Naive thymus-derived CD4-positive, alpha-beta T cell (primary cell): ENCODE measurements at regions of chr3 and their contacts with region 1.

Region 1: GRCh38 chr3:66500576-66501482 is at the start of gene LRIG1:
- DNase-seq: peak; percentile 86 to 99 (median 92)
- ATAC-seq: peak; percentile 96
- H3K4me3 ChIP-seq: peak within 1 kb of the TSS; percentile 61
- H3K4me3 Mint-ChIP-seq: peak within 1 kb of the TSS; percentile 89 to 98 (median 94)
- H3K27ac ChIP-seq: peak within 1 kb of the TSS; percentile 60
- H3K27ac Mint-ChIP-seq: peak within 1 kb of the TSS; percentile 53 to 87 (median 74)
- H3K4me1 ChIP-seq: peaks cover 39 to 42% of the 10 kb centered on the region in 2 donors
- H3K4me1 Mint-ChIP-seq: peaks cover 38 to 69% (median 64%) of the 10 kb centered on the region in 7 donors
- H3K27me3 ChIP-seq: no peaks in the 10 kb centered on the region
- H3K27me3 Mint-ChIP-seq: peaks cover 0 to 36% (median 5%) of the 10 kb centered on the region in 5 donors
- total RNA-seq, gene LRIG1: 28.5 to 46.3 (median 34.4) TPM

Region 2: DNA sequence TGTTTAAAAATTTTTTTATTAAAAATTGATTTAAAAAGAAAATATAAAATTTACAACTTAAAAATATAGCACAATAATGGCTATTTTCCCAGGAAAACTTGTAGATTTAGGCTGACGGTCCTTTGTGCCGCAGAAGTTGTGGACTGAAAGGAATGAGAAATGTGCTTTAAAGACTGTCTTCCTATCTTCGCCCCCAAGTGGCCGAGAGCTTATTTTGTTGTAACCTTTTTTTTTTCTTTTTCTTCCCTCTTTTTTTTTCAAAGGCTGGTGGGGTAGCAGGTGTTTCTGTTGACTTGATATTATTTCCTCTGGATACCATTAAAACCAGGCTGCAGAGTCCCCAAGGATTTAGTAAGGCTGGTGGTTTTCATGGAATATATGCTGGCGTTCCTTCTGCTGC is 264.5 kb before region 1 on chr3:
- CTCF ChIA-PET with region 1: no interaction called
- POLR2A ChIA-PET with region 1: no interaction called
- intact Hi-C with region 1: loop called in 1 of 2 experiments (anchors 5 kb)
- DNase-seq: no peak
- ATAC-seq: no peak
- H3K4me3 ChIP-seq: no peak overlapping the region
- H3K4me3 Mint-ChIP-seq: no peak overlapping the region
- H3K27ac ChIP-seq: no peak overlapping the region
- H3K27ac Mint-ChIP-seq: no peak overlapping the region
- H3K4me1 ChIP-seq: no peaks in the 10 kb centered on the region
- H3K4me1 Mint-ChIP-seq: peaks cover 8 to 43% (median 21%) of the 10 kb centered on the region in 7 donors
- H3K27me3 ChIP-seq: no peaks in the 10 kb centered on the region
- H3K27me3 Mint-ChIP-seq: no peaks in the 10 kb centered on the region

Region 3: GRCh38 chr3:66302288-66302687 is 198.5 kb before region 1 on chr3:
- CTCF ChIA-PET with region 1: no interaction called
- POLR2A ChIA-PET with region 1: no interaction called
- intact Hi-C with region 1: loop called (anchors 1 to 2 kb)
- DNase-seq: peak in 7 of 9 donors; percentile 44 to 78 (median 64)
- ATAC-seq: peak; percentile 87
- H3K4me3 ChIP-seq: no peak overlapping the region
- H3K4me3 Mint-ChIP-seq: peak overlapping the region in 9 of 10 donors; percentile 29 to 71 (median 50)
- H3K27ac ChIP-seq: peak overlapping the region; percentile 53
- H3K27ac Mint-ChIP-seq: peak overlapping the region; percentile 71 to 99 (median 94)
- H3K4me1 ChIP-seq: peaks cover 49 to 79% of the 10 kb centered on the region in 2 donors
- H3K4me1 Mint-ChIP-seq: peaks cover 50 to 86% (median 69%) of the 10 kb centered on the region in 7 donors
- H3K27me3 ChIP-seq: no peaks in the 10 kb centered on the region
- H3K27me3 Mint-ChIP-seq: no peaks in the 10 kb centered on the region

Region 4: DNA sequence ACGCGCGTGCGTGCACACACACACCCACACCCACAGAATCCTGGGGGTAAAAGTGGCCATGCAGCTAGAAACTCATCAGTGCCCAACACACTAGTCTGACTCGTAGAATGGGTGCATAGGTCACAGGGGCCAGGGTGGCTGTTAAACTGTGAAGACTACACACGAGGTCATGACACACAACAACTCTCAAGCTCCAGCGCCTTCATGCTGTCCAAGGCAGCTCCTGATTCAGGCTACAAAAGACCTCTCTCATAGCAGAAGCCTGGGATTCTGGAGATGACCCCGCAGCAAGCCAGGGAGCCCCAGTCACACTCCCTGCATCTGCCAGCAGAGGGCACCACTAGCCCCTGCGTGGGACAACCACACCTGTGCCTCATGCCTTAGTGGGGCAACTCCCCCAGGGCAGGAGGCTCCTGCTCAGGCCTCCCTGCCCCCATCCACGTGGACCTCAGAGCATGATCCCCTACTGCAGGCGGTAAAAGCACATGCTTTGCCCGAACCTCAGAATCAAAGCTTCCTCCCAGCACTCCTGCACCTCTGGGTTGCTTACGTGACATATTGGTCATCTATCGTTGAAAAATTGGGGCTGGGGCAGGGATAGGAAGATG is 93.1 kb before region 1 on chr3:
- CTCF ChIA-PET with region 1: interaction called, 3 read pairs
- POLR2A ChIA-PET with region 1: interaction called, 3 read pairs
- intact Hi-C with region 1: loop called (anchors 1 kb)
- DNase-seq: peak; percentile 45 to 79 (median 65)
- ATAC-seq: peak; percentile 89
- H3K4me3 ChIP-seq: no peak overlapping the region
- H3K4me3 Mint-ChIP-seq: no peak overlapping the region
- H3K27ac ChIP-seq: no peak overlapping the region
- H3K27ac Mint-ChIP-seq: no peak overlapping the region
- H3K4me1 ChIP-seq: no peaks in the 10 kb centered on the region
- H3K4me1 Mint-ChIP-seq: peaks cover 0 to 10% (median 0%) of the 10 kb centered on the region in 7 donors
- H3K27me3 ChIP-seq: no peaks in the 10 kb centered on the region
- H3K27me3 Mint-ChIP-seq: no peaks in the 10 kb centered on the region

Region 5: GRCh38 chr3:66483406-66483906 is 17.4 kb before region 1 on chr3:
- CTCF ChIA-PET with region 1: no interaction called
- POLR2A ChIA-PET with region 1: interaction called, 6 read pairs
- intact Hi-C with region 1: loop called (anchors 1 kb)
- DNase-seq: peak in 1 of 9 donors; percentile 13
- ATAC-seq: peak; percentile 55
- H3K4me3 ChIP-seq: no peak overlapping the region
- H3K4me3 Mint-ChIP-seq: peak overlapping the region in 8 of 10 donors; percentile 1 to 68 (median 50)
- H3K27ac ChIP-seq: no peak overlapping the region
- H3K27ac Mint-ChIP-seq: peak overlapping the region in 7 of 9 donors; percentile 7 to 70 (median 55)
- H3K4me1 ChIP-seq: peaks cover 42 to 47% of the 10 kb centered on the region in 2 donors
- H3K4me1 Mint-ChIP-seq: peaks cover 53 to 86% (median 77%) of the 10 kb centered on the region in 7 donors
- H3K27me3 ChIP-seq: no peaks in the 10 kb centered on the region
- H3K27me3 Mint-ChIP-seq: no peaks in the 10 kb centered on the region

Region 6: DNA sequence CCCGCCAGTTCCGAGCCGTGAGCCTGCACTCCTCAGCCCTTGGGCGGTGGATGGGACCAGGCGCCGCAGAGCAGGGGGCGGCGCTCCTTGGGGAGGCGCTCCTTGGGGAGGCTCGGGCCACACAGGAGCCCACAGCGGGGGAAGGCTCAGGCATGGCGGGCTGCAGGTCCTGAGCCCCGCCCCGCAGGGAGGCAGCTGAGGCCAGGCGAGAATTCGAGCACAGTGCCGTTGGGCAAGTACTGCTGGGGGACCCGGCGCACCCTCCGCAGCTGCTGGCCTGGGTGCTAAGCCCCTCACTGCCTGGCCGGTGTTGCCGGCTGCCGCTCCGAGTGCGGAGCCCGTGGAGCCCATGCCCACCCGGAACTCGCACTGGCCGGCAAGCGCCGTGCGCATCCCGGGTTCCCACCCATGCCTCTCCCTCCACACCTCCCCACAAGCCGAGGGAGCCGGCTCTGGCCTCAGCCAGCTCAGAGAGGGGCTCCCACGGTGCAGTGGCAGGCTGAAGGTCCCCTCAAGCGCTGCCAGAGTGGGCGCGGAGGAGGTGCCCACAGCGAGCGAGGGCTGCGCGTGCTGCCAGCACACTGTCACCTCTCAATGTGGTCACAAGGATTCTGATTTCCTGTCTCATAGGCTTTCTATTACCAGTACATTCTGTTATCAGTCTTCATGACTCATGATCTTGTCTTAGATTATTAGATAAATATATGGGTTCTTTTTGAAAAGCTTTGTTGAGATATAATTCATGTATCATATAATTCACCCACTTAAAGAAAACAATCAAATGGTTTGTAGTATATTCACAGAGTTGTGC is 44.0 kb after region 1 on chr3:
- CTCF ChIA-PET with region 1: no interaction called
- POLR2A ChIA-PET with region 1: no interaction called
- intact Hi-C with region 1: no loop called
- DNase-seq: no peak
- ATAC-seq: no peak
- H3K4me3 ChIP-seq: no peak overlapping the region
- H3K4me3 Mint-ChIP-seq: no peak overlapping the region
- H3K27ac ChIP-seq: no peak overlapping the region
- H3K27ac Mint-ChIP-seq: no peak overlapping the region
- H3K4me1 ChIP-seq: no peaks in the 10 kb centered on the region
- H3K4me1 Mint-ChIP-seq: no peaks in the 10 kb centered on the region
- H3K27me3 ChIP-seq: no peaks in the 10 kb centered on the region
- H3K27me3 Mint-ChIP-seq: peaks cover 0 to 3% (median 0%) of the 10 kb centered on the region in 5 donors

Region 7: DNA sequence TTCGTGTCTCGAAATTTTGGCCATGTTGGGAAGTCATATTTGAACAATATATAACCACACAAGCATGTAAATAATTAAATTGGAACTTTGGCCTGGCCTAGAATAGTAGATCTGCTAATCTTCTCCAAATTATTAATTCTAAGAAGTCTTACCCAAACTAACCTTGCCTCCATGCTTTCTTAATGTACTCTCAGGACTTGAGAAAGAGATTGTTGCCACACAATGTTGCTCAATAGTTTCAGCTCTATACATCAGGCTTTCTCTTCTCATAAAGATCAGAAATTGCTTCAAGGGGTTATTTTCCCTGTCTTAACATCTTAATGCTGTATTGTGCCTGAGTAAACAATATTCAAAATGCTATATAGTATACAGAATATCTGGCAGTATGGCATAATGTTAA is 202.7 kb after region 1 on chr3:
- CTCF ChIA-PET with region 1: no interaction called
- POLR2A ChIA-PET with region 1: no interaction called
- intact Hi-C with region 1: no loop called
- DNase-seq: no peak
- ATAC-seq: no peak
- H3K4me3 ChIP-seq: no peak overlapping the region
- H3K4me3 Mint-ChIP-seq: no peak overlapping the region
- H3K27ac ChIP-seq: no peak overlapping the region
- H3K27ac Mint-ChIP-seq: no peak overlapping the region
- H3K4me1 ChIP-seq: no peaks in the 10 kb centered on the region
- H3K4me1 Mint-ChIP-seq: no peaks in the 10 kb centered on the region
- H3K27me3 ChIP-seq: no peaks in the 10 kb centered on the region
- H3K27me3 Mint-ChIP-seq: peaks cover 0 to 8% (median 4%) of the 10 kb centered on the region in 5 donors

Region 8: GRCh38 chr3:66816090-66816761 is 315.4 kb after region 1 on chr3:
- CTCF ChIA-PET with region 1: no interaction called
- POLR2A ChIA-PET with region 1: no interaction called
- intact Hi-C with region 1: loop called in 1 of 2 experiments (anchors 5 kb)
- DNase-seq: peak in 6 of 9 donors; percentile 39 to 64 (median 62)
- ATAC-seq: peak; percentile 85
- H3K4me3 ChIP-seq: no peak overlapping the region
- H3K4me3 Mint-ChIP-seq: no peak overlapping the region
- H3K27ac ChIP-seq: no peak overlapping the region
- H3K27ac Mint-ChIP-seq: no peak overlapping the region
- H3K4me1 ChIP-seq: no peaks in the 10 kb centered on the region
- H3K4me1 Mint-ChIP-seq: peaks cover 0 to 2% (median 0%) of the 10 kb centered on the region in 7 donors
- H3K27me3 ChIP-seq: no peaks in the 10 kb centered on the region
- H3K27me3 Mint-ChIP-seq: peaks cover 0 to 22% (median 3%) of the 10 kb centered on the region in 5 donors

Region 9: GRCh38 chr3:67947808-67948508 is 1447.1 kb after region 1 on chr3:
- CTCF ChIA-PET with region 1: no interaction called
- POLR2A ChIA-PET with region 1: no interaction called
- intact Hi-C with region 1: loop called in 1 of 2 experiments (anchors 5 kb)
- DNase-seq: peak in 8 of 9 donors; percentile 25 to 92 (median 84)
- ATAC-seq: peak; percentile 97
- H3K4me3 ChIP-seq: peak overlapping the region; percentile 40
- H3K4me3 Mint-ChIP-seq: peak overlapping the region; percentile 76 to 92 (median 83)
- H3K27ac ChIP-seq: peak overlapping the region; percentile 38
- H3K27ac Mint-ChIP-seq: peak overlapping the region; percentile 76 to 97 (median 91)
- H3K4me1 ChIP-seq: peaks cover 6 to 26% of the 10 kb centered on the region in 2 donors
- H3K4me1 Mint-ChIP-seq: peaks cover 11 to 54% (median 39%) of the 10 kb centered on the region in 7 donors
- H3K27me3 ChIP-seq: no peaks in the 10 kb centered on the region
- H3K27me3 Mint-ChIP-seq: no peaks in the 10 kb centered on the region